ENCODE measurements at regions of chr4 and their contacts with region 1.

Region 1: DNA sequence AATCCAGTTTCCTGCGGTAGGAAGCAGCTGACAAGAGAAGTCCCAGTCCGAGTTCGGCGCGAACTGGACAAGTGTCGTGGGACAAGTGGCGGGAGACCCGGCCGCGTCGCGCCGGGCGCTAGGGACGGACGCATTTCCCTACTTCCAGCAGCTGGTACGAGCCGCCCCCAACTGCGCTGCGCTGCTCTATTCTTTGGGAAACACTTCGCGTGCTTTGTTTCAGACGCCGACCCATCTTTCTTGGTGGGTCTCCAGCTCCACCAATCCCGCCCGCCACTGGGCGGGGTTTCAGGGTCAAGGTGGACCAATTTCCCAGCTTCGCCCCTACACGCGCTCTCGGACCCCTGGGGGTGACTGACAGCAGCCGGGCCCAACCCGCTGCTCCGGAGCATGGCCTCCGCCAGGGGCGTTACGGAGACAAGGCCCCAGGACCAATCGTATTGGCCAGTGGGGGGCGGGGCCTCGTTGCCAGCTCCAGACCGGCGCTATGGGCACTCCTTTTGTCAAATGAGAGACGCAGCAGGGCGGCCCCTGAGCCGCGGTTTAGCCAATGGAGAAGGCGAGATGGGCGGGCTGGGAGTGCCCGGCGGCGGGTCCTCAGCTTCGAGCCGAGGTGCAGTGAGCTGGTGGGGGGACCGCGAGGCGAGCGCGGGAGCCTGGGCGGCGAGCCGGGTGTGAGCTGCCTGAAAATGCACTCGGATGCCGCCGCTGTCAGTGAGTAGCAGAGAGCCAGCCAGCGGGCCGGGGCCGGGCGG is at the start of gene DCUN1D4:
- DNase-seq: peak; percentile 92 to 99 (median 98)
- ATAC-seq: peak; percentile 82
- H3K4me3 ChIP-seq: peak within 1 kb of the TSS; percentile 75
- H3K4me3 Mint-ChIP-seq: peak within 1 kb of the TSS; percentile 100
- H3K27ac ChIP-seq: peak within 1 kb of the TSS; percentile 58 to 68
- H3K27ac Mint-ChIP-seq: peak within 1 kb of the TSS; percentile 90
- H3K4me1 ChIP-seq: peaks cover 19% of the 10 kb centered on the region
- H3K4me1 Mint-ChIP-seq: peaks cover 38% of the 10 kb centered on the region
- H3K27me3 ChIP-seq: no peaks in the 10 kb centered on the region
- H3K27me3 Mint-ChIP-seq: no peaks in the 10 kb centered on the region
- CTCF ChIP-seq: peak; percentile 26
- total RNA-seq, gene DCUN1D4: 36.2 to 39.9 TPM

Region 2: GRCh38 chr4:51831133-51831532 is 11.6 kb before region 1 on chr4:
- CTCF ChIA-PET with region 1: interaction called, 4 read pairs
- POLR2A ChIA-PET with region 1: interaction called, 10 read pairs
- intact Hi-C with region 1: no loop called
- DNase-seq: peak; percentile 48 to 77 (median 60)
- ATAC-seq: peak; percentile 71
- H3K4me3 ChIP-seq: no peak overlapping the region
- H3K4me3 Mint-ChIP-seq: no peak overlapping the region
- H3K27ac ChIP-seq: no peak overlapping the region
- H3K27ac Mint-ChIP-seq: no peak overlapping the region
- H3K4me1 ChIP-seq: no peaks in the 10 kb centered on the region
- H3K4me1 Mint-ChIP-seq: no peaks in the 10 kb centered on the region
- H3K27me3 ChIP-seq: no peaks in the 10 kb centered on the region
- H3K27me3 Mint-ChIP-seq: peaks cover 9% of the 10 kb centered on the region
- CTCF ChIP-seq: peak; percentile 83

Region 3: DNA sequence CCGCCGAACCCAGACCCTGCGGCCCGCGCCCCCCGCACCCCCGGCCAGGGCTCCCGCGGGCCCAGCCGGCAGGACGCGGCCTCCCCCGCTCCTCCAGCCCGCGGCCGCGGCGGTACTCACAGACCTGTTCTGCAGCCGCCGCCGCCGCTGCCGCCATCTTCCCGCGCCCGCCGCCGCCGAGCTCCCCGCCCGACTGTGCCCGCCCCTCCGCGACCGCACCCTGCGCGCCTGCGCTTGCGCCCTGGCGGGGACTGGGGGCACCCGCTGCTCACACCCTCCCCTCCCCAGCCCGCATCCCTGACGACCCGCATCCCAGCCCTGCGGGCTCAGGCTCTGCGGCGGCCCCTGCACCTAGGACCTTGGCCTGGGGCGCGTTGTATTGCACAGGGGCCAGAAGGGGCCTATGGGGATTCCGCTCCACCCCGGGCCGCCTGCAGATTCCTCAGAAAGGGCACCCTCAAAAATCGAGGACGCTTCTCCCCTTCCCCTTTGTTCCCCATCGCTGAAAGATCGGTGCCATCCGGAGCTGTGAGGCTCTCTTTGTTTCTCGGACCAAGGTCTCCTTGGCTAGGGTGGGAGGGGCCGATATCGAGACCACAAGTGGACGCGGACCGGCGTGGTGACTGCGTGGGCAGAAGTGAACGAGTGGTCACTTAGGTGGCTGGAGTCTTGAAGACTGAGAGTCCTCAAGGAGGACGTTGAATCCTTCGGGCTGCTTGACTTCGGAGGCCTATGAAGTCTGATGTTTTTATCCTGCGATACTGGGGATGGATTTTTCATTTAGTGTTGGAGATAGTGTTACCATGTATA is 195.6 kb after region 1 on chr4 and contains the start of gene SGCB:
- CTCF ChIA-PET with region 1: no interaction called
- POLR2A ChIA-PET with region 1: interaction called, 20 read pairs
- intact Hi-C with region 1: loop called in 1 of 2 experiments (anchors 5 kb)
- DNase-seq: peak; percentile 48 to 83 (median 69)
- ATAC-seq: peak; percentile 93
- H3K4me3 ChIP-seq: peak within 1 kb of the TSS; percentile 69
- H3K4me3 Mint-ChIP-seq: peak within 1 kb of the TSS; percentile 84
- H3K27ac ChIP-seq: no peak within 1 kb of the TSS
- H3K27ac Mint-ChIP-seq: peak within 1 kb of the TSS; percentile 60
- H3K4me1 ChIP-seq: peaks cover 10% of the 10 kb centered on the region
- H3K4me1 Mint-ChIP-seq: peaks cover 39% of the 10 kb centered on the region
- H3K27me3 ChIP-seq: peaks cover 0 to 4% of the 10 kb centered on the region in 2 experiments
- H3K27me3 Mint-ChIP-seq: peaks cover 20% of the 10 kb centered on the region
- CTCF ChIP-seq: no peak
- total RNA-seq, gene SGCB: 3.8 to 4.1 TPM

Region 4: DNA sequence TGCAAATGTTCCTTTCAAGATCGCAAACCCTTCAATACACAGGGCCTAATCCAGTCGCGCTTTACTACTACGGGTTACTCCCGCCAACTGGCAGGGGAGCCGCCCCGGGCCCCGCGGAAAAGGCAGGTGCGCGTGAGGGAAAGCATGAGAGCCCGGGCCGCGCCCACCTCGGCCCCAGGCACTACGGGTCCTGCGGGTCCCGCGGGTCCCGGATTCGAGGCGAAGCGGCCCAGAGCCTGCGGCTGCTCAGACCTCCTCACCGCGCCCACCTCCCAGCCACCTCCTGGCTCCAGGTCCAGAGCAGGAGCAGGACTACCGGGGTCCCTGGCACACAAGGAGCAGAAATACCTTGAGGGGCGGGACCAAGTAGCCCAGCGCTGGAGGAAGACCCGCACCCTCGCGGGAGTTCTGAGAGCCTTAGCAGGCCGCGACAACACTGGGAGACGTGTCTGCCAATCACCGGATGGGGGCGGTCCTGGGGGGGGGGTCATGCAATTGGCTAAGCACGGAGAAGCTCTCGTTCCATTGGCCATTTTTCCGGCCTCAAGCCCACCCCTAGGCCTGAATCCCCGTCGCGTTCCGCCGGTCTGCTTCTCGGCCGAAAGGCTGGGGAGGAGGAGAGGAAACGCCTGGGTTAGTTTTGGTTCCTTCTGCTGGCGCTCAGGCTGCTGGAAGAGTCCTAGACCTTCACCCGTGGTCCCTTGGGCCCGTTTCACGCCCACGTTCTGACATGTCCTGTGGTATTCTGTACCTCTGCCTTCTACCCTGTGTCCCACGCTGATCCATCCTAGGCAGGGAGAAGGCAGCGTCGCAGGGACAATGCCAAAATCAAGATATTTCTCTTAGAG is 879.5 kb after region 1 on chr4:
- CTCF ChIA-PET with region 1: no interaction called
- POLR2A ChIA-PET with region 1: interaction called, 3 read pairs
- intact Hi-C with region 1: loop called in 1 of 2 experiments (anchors 5 kb)
- DNase-seq: peak; percentile 76 to 97 (median 84)
- ATAC-seq: peak; percentile 98
- H3K4me3 ChIP-seq: peak overlapping the region; percentile 76
- H3K4me3 Mint-ChIP-seq: peak overlapping the region; percentile 78
- H3K27ac ChIP-seq: peak overlapping the region; percentile 69 to 84
- H3K27ac Mint-ChIP-seq: peak overlapping the region; percentile 89
- H3K4me1 ChIP-seq: peaks cover 18% of the 10 kb centered on the region
- H3K4me1 Mint-ChIP-seq: peaks cover 15% of the 10 kb centered on the region
- H3K27me3 ChIP-seq: no peaks in the 10 kb centered on the region
- H3K27me3 Mint-ChIP-seq: no peaks in the 10 kb centered on the region
- CTCF ChIP-seq: no peak

Region 5: DNA sequence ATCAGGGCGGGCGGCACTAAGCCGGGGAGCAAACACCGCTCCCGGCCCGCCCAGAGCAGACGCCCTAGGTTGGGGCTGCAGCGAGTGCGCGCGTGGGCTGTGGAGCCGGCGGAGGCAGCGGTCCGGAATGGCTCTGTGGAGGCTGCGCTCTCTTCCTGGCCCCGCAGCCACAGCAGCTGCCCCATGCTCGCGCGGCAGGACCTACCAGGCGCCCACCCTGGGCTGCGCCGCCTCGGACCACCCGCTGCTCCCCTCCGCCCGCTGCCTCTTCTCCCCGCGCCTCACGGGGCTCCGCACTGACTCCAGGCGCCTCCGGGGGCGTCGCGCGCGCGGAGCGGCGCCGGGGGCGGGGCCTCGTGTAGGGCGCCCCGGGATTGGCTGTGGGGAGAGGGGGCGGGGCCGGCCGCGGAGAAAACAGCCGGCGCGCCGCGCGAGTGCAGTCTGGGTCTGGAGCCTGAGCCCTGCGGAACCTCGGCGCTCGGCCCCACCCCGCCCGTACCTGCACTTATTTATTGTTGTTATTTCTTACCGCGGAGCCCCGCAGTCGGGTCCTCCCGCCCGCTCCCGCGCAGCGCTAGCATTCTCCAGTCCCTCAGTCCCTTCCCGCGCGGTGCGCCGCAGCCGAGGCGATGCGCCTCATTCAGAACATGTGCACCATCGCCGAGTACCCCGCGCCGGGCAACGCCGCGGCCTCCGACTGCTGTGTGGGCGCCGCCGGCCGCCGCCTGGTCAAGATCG is 1019.3 kb after region 1 on chr4 and contains the start of gene RASL11B:
- CTCF ChIA-PET with region 1: no interaction called
- POLR2A ChIA-PET with region 1: no interaction called
- intact Hi-C with region 1: loop called in 1 of 2 experiments (anchors 10 kb)
- DNase-seq: peak; percentile 65 to 93 (median 81)
- ATAC-seq: peak; percentile 98
- H3K4me3 ChIP-seq: peak within 1 kb of the TSS; percentile 58
- H3K4me3 Mint-ChIP-seq: peak within 1 kb of the TSS; percentile 83
- H3K27ac ChIP-seq: no peak within 1 kb of the TSS
- H3K27ac Mint-ChIP-seq: no peak within 1 kb of the TSS
- H3K4me1 ChIP-seq: peaks cover 18% of the 10 kb centered on the region
- H3K4me1 Mint-ChIP-seq: peaks cover 12% of the 10 kb centered on the region
- H3K27me3 ChIP-seq: peaks cover 19 to 20% of the 10 kb centered on the region in 2 experiments
- H3K27me3 Mint-ChIP-seq: peaks cover 46% of the 10 kb centered on the region
- CTCF ChIP-seq: peak; percentile 33
- total RNA-seq, gene RASL11B: 0.31 to 0.63 TPM

Region 6: DNA sequence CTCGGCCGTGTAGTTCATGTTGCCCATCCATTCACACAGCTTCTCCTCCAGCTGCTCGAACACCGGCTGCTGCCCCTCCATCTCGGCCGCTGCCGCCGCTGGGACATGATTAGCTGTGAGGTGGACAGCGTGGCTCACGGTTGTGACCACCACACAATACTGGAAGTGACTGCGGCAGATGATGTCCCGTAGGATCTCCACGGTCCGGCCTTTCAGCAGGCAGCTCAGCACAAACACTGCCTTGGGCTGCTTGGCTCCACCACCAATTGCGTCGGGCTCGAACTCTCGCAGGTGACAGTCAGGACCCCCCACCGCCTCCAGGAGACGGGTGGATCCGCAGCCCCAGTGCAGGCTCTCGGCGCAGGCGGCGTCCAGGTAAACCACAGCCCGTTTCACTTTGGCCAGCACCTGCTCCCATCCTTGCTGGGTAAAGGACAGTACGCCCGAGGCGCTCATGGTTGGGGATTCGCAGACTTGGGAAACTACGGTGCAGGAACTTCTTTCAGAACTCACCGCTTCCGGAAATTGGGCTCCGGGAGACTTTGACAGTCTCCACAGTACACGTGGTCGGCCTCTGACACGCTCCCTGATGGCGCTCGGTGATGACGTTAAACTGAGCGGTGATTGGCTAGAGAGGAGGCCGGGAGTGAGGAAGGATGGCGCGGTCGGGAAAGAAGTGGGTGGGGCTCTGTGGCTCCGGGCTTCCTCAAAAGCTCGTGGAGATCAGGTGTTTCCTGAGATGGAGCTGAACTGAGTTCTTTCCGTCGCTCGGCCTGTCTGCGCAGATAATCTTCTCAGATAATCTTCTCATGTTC is 1523.0 kb after region 1 on chr4 and contains the start of gene SCFD2:
- CTCF ChIA-PET with region 1: no interaction called
- POLR2A ChIA-PET with region 1: no interaction called
- intact Hi-C with region 1: loop called (anchors 5 kb)
- DNase-seq: peak; percentile 87 to 98 (median 95)
- ATAC-seq: peak; percentile 95
- H3K4me3 ChIP-seq: peak within 1 kb of the TSS; percentile 72
- H3K4me3 Mint-ChIP-seq: peak within 1 kb of the TSS; percentile 91
- H3K27ac ChIP-seq: peak within 1 kb of the TSS; percentile 75 to 77
- H3K27ac Mint-ChIP-seq: peak within 1 kb of the TSS; percentile 93
- H3K4me1 ChIP-seq: peaks cover 30% of the 10 kb centered on the region
- H3K4me1 Mint-ChIP-seq: peaks cover 55% of the 10 kb centered on the region
- H3K27me3 ChIP-seq: peaks cover 0 to 6% of the 10 kb centered on the region in 2 experiments
- H3K27me3 Mint-ChIP-seq: peaks cover 11% of the 10 kb centered on the region
- CTCF ChIP-seq: no peak
- total RNA-seq, gene SCFD2: 15.4 to 17.6 TPM

Measured in CD4-positive, alpha-beta T cell (primary cell).